Heart right ventricle (tissue), 16 donors: ENCODE measurements at regions of chr1 and their contacts with region 1.

Region 1: DNA sequence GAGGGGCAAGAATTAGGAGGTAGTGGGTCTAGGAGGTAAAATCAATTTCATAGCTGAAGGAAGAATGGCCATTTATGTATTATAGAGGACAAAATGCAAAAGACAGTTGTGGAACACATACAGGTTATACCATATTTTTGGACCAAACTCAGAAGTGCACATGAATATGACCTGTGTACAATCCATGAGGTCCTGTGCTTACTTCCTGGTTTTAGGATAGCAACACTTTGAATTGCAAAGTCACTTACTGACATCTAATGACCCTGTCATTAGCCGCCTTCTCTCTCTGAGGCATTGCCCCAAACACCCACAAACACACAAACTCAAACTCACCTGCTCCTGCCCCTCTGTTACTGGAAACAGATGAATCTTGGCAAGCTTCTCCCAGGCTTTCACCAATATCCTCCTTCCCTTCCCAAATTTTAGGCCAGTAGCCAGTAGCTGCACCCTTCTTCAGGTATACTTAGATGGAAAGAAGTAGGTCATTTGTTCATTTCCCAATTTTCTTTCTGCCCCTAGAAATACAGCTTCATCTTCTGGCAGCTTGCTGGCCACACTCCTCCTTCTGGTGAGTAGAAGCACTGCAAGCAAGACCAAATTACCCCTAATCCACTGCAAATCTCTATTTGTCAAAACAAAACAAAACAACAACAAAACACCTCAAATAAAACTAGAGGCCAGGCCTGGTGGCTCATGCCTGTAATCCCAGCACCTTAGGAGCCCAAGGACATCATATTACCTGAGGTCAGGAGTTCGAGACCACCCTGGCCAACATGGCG is 13.7 kb upstream of the RPL5 start:
- DNase-seq: peak in 1 of 2 donors; percentile 12
- ATAC-seq: peak in 1 of 8 donors; percentile 27
- H3K4me3 ChIP-seq: no peak overlapping the region
- H3K27ac ChIP-seq: no peak overlapping the region
- H3K4me1 ChIP-seq: no peaks in the 10 kb centered on the region
- H3K27me3 ChIP-seq: no peaks in the 10 kb centered on the region
- CTCF ChIP-seq: peak; percentile 36 to 75 (median 69)

Region 2: GRCh38 chr1:92749024-92749634 is 69.0 kb before region 1 on chr1:
- intact Hi-C with region 1: loop called in 8 of 10 experiments (anchors 2 to 5 kb)
- DNase-seq: peak in 1 of 2 donors; percentile 29
- ATAC-seq: peak in 6 of 8 donors; percentile 40 to 58 (median 54)
- H3K4me3 ChIP-seq: no peak overlapping the region
- H3K27ac ChIP-seq: no peak overlapping the region
- H3K4me1 ChIP-seq: peaks cover 0 to 30% (median 11%) of the 10 kb centered on the region in 9 donors
- H3K27me3 ChIP-seq: no peaks in the 10 kb centered on the region
- CTCF ChIP-seq: peak; percentile 21 to 71 (median 53)

Region 3: DNA sequence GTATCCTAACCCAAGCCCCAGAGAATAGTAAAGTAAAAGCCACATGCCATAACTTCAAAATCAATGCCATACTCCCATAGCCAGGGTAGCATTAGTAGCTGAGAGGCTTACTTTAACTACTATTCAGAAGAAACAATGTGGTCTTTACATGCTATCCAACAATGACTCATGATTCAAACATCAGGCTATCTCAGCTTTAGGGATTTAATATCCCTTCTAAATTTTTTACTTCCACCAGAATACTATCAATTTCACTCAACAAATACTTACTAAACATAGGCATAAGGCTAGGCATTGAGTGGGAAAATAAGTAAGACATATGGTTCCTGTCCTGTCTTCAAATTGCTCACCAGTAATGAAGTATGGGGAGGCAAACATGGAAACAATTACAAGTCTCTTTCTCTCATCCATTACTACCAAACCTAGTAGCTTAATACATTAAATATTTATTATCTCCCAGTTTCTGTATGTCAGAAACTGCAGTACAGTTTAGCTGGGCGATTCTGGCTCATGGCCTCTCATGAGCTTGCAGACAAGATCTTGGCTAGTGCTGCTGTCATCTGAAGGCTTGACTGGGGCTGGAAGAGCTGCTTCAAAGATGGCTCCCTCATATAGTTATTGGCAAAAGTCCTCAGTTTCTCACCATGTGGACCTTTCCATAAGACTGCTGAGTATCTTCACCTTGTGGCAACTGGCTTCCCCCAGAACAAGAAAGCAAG is 64.0 kb before region 1 on chr1:
- intact Hi-C with region 1: loop called in 8 of 10 experiments (anchors 2 to 5 kb)
- DNase-seq: no peak
- ATAC-seq: no peak
- H3K4me3 ChIP-seq: no peak overlapping the region
- H3K27ac ChIP-seq: peak overlapping the region in 3 of 10 donors; percentile 2 to 85 (median 80)
- H3K4me1 ChIP-seq: peaks cover 4 to 28% (median 15%) of the 10 kb centered on the region in 9 donors
- H3K27me3 ChIP-seq: no peaks in the 10 kb centered on the region
- CTCF ChIP-seq: no peak